K562 (cell line): ENCODE measurements at regions of chr10 and their contacts with region 1.

Region 1: GRCh38 chr10:27319752-27320561 is 79.4 kb upstream of the ACBD5 start:
- DNase-seq: peak; percentile 6 to 15 (median 10)
- ATAC-seq: peak; percentile 71
- H3K4me3 ChIP-seq: no peak overlapping the region
- H3K27ac ChIP-seq: no peak overlapping the region
- H3K4me1 ChIP-seq: peaks cover 0 to 5% of the 10 kb centered on the region in 2 experiments; a peak in 2 of 5 replicates
- H3K27me3 ChIP-seq: peaks cover 15 to 23% of the 10 kb centered on the region in 2 experiments; a peak in 4 of 5 replicates
- CTCF ChIP-seq: no peak
- EP300 ChIP-seq: no peak
- POLR2A ChIP-seq: no peak
- RAD21 ChIP-seq: no peak

Region 2: DNA sequence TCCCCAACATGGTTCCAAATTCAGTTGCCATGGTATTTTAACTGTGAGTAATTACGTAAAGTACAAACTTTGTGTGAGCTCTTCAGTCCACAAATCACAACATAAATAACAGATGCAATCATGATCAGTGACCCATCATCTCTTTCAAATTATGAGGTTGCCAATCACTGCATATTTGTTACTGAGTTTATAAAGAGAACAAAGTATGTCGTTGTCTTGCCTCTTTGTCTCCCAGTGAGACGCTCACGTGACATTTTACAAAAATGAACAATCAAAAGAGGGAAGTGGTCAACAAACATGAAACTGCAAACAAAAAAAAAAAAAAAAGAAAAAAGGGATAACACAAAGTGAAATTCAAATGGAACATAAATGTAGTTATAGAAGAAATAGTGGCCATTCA is 745.2 kb before region 1 on chr10:
- CTCF ChIA-PET with region 1: no interaction called
- POLR2A ChIA-PET with region 1: no interaction called
- in situ Hi-C with region 1: loop called (anchors 5 kb)
- intact Hi-C with region 1: no loop called
- DNase-seq: no peak
- ATAC-seq: no peak
- H3K4me3 ChIP-seq: no peak overlapping the region
- H3K27ac ChIP-seq: no peak overlapping the region
- H3K4me1 ChIP-seq: peaks cover 0 to 5% of the 10 kb centered on the region in 2 experiments; a peak in 1 of 5 replicates
- H3K27me3 ChIP-seq: peaks cover 3 to 5% of the 10 kb centered on the region in 2 experiments; a peak in 3 of 5 replicates
- CTCF ChIP-seq: no peak
- EP300 ChIP-seq: no peak
- POLR2A ChIP-seq: no peak
- RAD21 ChIP-seq: no peak